Left colon (tissue), 2 donors: ENCODE measurements at regions of chr4 and their contacts with region 1.

Region 1: GRCh38 chr4:89894649-89895550 is at the start of gene MMRN1:
- DNase-seq: no peak
- ATAC-seq: no peak
- total RNA-seq, gene MMRN1: 13.1 to 14.0 TPM

Region 2: GRCh38 chr4:89164400-89164799 is 730.5 kb before region 1 on chr4:
- intact Hi-C with region 1: loop called in 1 of 2 experiments (anchors 10 kb)
- DNase-seq: no peak
- ATAC-seq: peak; percentile 41

Region 3: GRCh38 chr4:90030954-90031353 is 136.1 kb after region 1 on chr4:
- intact Hi-C with region 1: no loop called
- DNase-seq: no peak
- ATAC-seq: peak; percentile 41